HEK293 (cell line): ENCODE measurements at regions of chr1 and their contacts with region 1.

Region 1: DNA sequence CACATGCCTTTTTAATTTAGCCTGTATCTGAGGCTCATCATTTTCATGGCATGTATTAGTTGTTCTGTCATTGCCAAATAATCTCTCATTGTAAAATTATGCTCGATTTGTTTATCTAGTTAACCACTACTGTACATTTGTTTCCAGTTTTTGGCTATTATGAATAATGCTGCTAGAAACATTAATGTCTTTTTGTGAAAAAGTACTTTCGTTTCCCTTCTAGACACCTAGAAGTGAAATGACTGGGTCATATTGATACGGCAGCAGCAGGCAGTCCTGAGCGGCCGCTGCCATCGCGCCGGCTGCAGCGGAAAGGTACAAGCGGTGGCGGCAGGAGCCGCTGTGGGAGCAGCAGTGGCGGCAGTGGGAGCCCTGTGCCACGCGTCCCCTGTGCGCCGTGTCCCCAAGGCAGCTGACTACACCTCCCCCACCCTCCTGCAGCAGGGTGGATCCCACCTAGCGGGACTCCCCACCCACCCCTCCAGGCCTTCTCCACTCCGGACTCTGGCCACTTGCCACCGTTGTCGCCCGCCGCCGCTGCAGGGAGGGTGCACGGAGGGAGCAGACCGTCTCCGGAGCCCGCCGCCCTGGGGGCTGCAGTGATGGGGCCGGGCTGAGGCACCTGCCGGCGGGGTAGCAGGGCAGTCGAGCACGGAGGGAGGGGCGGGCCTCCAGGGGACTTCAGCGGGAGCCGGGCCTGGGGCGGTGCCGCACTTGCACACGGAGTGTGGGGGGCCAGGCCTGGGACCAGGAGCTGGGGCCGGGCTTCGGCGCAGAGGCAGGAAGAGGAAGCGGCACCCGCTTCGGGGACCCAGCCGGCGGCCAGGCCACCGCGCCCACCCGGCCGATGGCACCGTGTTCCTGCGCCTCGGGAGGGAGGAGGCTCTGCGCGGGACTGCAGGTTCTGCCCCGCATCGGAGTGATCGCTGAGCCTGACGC is 66.8 kb upstream of the RGS7 start:
- H3K4me3 ChIP-seq: peak overlapping the region; percentile 77
- H3K27ac ChIP-seq: peak overlapping the region; percentile 62; the same call in 1 of the 2 replicates
- H3K4me1 ChIP-seq: no peaks in the 10 kb centered on the region
- CTCF ChIP-seq: peak; percentile 93

Region 2: DNA sequence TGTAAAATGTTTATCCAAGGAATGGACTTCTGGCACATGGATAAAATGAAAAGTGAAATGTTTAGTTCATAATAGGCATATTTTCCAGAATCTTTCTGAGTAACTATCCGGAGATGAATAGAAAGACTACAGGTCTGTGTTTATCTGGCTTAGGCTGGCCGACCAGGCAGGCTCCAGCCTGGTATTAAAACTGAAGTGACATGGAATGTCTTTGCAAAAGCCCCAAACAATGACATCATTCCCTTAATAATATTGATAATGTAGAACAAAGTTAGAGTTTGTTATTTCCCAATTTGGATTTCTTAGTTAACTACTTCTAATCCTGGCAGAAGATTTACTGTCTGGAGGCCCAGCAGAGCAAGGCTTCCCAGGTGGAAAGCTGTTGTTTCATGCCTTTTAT is 1019.6 kb before region 1 on chr1:
- CTCF ChIA-PET with region 1: no interaction called
- POLR2A ChIA-PET with region 1: interaction called, 11 read pairs
- H3K4me3 ChIP-seq: no peak overlapping the region
- H3K27ac ChIP-seq: no peak overlapping the region
- H3K4me1 ChIP-seq: no peaks in the 10 kb centered on the region; the same call in 1 of the 2 replicates
- CTCF ChIP-seq: no peak